Stomach (tissue), 19 donors: ENCODE measurements at regions of chr9 and their contacts with region 1.

Region 1: GRCh38 chr9:20941174-20941690 is 90.2 kb downstream of the HACD4 start:
- DNase-seq: peak; percentile 65 to 89
- H3K4me3 ChIP-seq: no peak overlapping the region
- H3K27ac ChIP-seq: no peak overlapping the region
- H3K4me1 ChIP-seq: peaks cover 0 to 5% (median 2%) of the 10 kb centered on the region in 4 donors
- H3K27me3 ChIP-seq: no peaks in the 10 kb centered on the region
- CTCF ChIP-seq: peak in 5 of 7 experiments; percentile 47 to 82 (median 68)
- EP300 ChIP-seq: no peak
- POLR2A ChIP-seq: no peak

Region 2: GRCh38 chr9:19925817-19926503 is 1015.3 kb before region 1 on chr9:
- intact Hi-C with region 1: loop called (anchors 5 kb)
- DNase-seq: peak; percentile 74 to 93
- H3K4me3 ChIP-seq: peak overlapping the region; percentile 31 to 36 (median 34)
- H3K27ac ChIP-seq: no peak overlapping the region
- H3K4me1 ChIP-seq: peaks cover 0 to 12% (median 5%) of the 10 kb centered on the region in 4 donors
- H3K27me3 ChIP-seq: no peaks in the 10 kb centered on the region
- CTCF ChIP-seq: peak in 5 of 7 experiments; percentile 93 to 95 (median 94)
- EP300 ChIP-seq: no peak
- POLR2A ChIP-seq: no peak

Region 3: DNA sequence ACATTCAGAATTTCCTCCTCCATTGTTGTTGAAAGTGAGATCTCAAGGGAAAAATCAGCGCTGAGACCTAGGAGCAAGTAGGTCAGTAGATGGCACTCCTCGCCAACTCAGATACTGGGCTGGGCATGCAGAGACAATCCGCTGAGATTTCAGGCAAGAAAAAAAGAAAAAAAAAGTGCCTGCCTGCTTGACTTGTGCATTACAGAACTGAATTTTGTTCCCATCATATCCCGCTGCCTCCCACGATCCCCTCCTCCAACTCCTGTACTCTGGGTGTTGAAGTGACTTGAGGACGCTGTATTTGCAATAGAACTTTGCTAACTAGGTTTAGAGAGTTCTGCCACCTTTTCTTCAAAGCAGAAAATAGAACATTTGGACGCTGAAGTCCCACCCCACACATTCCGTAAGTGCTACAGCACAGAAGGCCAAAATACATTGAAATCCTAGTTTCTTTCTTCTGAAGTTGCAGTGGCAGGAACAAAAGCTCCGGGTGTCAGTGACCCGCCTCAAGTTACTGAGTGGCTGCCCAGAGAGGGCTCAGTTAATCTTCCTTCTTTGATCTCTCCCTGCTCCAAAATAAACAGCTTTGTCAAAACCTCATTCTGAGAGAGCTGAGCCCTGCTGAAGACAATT is 584.7 kb before region 1 on chr9:
- intact Hi-C with region 1: loop called (anchors 10 kb)
- DNase-seq: peak; percentile 64 to 92
- H3K4me3 ChIP-seq: no peak overlapping the region
- H3K27ac ChIP-seq: peak overlapping the region in 3 of 5 donors; percentile 14 to 46 (median 26)
- H3K4me1 ChIP-seq: peaks cover 5 to 43% (median 23%) of the 10 kb centered on the region in 4 donors
- H3K27me3 ChIP-seq: no peaks in the 10 kb centered on the region
- CTCF ChIP-seq: peak in 5 of 7 experiments; percentile 17 to 54 (median 28)
- EP300 ChIP-seq: no peak
- POLR2A ChIP-seq: no peak

Region 4: DNA sequence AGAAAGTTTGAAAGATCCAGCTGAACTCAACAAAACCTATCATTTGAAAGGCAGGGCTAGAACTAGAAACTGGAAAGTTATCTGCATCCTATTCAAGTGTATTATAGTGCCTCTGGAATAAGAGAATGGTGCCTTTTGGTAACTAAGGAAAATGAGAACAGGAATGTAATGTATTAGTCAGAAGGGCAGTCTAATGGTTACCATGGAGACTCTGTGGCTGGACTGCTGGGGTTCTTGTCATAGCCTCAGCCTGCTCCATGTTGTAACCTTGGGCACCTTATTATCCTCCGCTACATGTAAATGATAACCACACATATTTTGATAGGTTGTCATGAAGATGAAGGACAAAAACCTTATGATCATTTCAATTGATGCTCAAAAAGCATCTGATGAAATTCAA is 161.1 kb after region 1 on chr9:
- intact Hi-C with region 1: loop called (anchors 10 kb)
- DNase-seq: no peak
- H3K4me3 ChIP-seq: no peak overlapping the region
- H3K27ac ChIP-seq: no peak overlapping the region
- H3K4me1 ChIP-seq: peaks cover 0 to 14% (median 7%) of the 10 kb centered on the region in 4 donors
- H3K27me3 ChIP-seq: no peaks in the 10 kb centered on the region
- CTCF ChIP-seq: no peak
- EP300 ChIP-seq: no peak
- POLR2A ChIP-seq: no peak